Heart right ventricle (tissue), 16 donors: ENCODE measurements at regions of chr2 and their contacts with region 1.

Region 1: GRCh38 chr2:41698678-41699422 is 349.0 kb upstream of the PKDCC start:
- DNase-seq: peak; percentile 43 to 62
- ATAC-seq: peak; percentile 17 to 81 (median 74)
- H3K4me3 ChIP-seq: peak overlapping the region in 8 of 10 donors; percentile 6 to 41 (median 26)
- H3K27ac ChIP-seq: no peak overlapping the region
- H3K4me1 ChIP-seq: peaks cover 0 to 12% (median 0%) of the 10 kb centered on the region in 9 donors
- H3K27me3 ChIP-seq: no peaks in the 10 kb centered on the region
- CTCF ChIP-seq: peak; percentile 77 to 96 (median 87)

Region 2: GRCh38 chr2:41414486-41415230 is 284.2 kb before region 1 on chr2:
- intact Hi-C with region 1: loop called in 8 of 10 experiments (anchors 2 to 5 kb)
- DNase-seq: no peak
- ATAC-seq: peak in 5 of 8 donors; percentile 31 to 63 (median 42)
- H3K4me3 ChIP-seq: no peak overlapping the region
- H3K27ac ChIP-seq: peak overlapping the region in 1 of 10 donors; percentile 7
- H3K4me1 ChIP-seq: peaks cover 0 to 9% (median 0%) of the 10 kb centered on the region in 9 donors
- H3K27me3 ChIP-seq: no peaks in the 10 kb centered on the region
- CTCF ChIP-seq: peak; percentile 35 to 69 (median 60)

Region 3: GRCh38 chr2:41420219-41420618 is 278.6 kb before region 1 on chr2:
- intact Hi-C with region 1: loop called in 5 of 10 experiments (anchors 2 to 5 kb)
- DNase-seq: no peak
- ATAC-seq: peak in 2 of 8 donors; percentile 7 to 44
- H3K4me3 ChIP-seq: no peak overlapping the region
- H3K27ac ChIP-seq: peak overlapping the region in 6 of 10 donors; percentile 15 to 43 (median 27)
- H3K4me1 ChIP-seq: peaks cover 0 to 15% (median 10%) of the 10 kb centered on the region in 9 donors
- H3K27me3 ChIP-seq: no peaks in the 10 kb centered on the region
- CTCF ChIP-seq: no peak

Region 4: GRCh38 chr2:41483226-41483625 is 215.6 kb before region 1 on chr2:
- intact Hi-C with region 1: loop called in 1 of 10 experiments (anchors 5 kb)
- DNase-seq: no peak
- ATAC-seq: peak in 1 of 8 donors; percentile 16
- H3K4me3 ChIP-seq: no peak overlapping the region
- H3K27ac ChIP-seq: peak overlapping the region in 3 of 10 donors; percentile 0 to 51 (median 34)
- H3K4me1 ChIP-seq: peaks cover 0 to 16% (median 10%) of the 10 kb centered on the region in 9 donors
- H3K27me3 ChIP-seq: no peaks in the 10 kb centered on the region
- CTCF ChIP-seq: no peak